ENCODE measurements at regions of chr2 and their contacts with region 1.

Region 1: GRCh38 chr2:44833171-44834069 is 108.1 kb upstream of the SIX3 start:
- DNase-seq: no peak
- H3K4me3 Mint-ChIP-seq: peak overlapping the region; percentile 38
- H3K27ac Mint-ChIP-seq: peak overlapping the region; percentile 94
- H3K4me1 Mint-ChIP-seq: peaks cover 43% of the 10 kb centered on the region
- H3K27me3 Mint-ChIP-seq: no peaks in the 10 kb centered on the region

Region 2: DNA sequence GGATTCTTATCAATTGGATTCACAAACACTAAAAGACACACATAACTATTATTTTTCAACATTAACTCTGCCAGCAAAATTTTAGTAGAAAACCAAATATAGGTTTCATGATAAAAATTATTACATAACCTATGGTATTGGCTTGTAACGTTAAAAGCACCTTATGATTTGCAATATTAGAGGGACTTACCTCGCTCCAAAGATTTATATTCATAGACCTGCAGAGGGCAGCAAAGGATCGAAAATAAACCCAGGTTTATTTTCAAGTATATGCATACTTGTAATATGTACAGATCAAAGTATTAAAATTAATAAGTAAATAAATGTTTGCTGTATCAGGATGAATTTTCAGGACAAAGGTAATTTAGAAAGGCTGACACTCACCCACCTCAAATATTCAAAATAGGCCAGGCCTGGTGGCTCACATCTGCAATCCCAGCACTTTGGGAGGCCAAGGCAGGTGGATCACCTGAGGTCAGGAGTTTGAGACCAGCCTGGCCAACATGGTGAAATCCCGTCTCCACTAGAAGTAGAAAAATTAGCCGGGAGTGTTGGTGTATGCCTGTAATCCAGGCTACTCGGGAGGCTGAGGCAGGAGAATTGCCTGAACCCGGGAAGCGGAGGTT is 882.9 kb before region 1 on chr2:
- intact Hi-C with region 1: no loop called
- DNase-seq: no peak
- H3K4me3 Mint-ChIP-seq: no peak overlapping the region
- H3K27ac Mint-ChIP-seq: peak overlapping the region; percentile 11
- H3K4me1 Mint-ChIP-seq: peaks cover 2% of the 10 kb centered on the region
- H3K27me3 Mint-ChIP-seq: no peaks in the 10 kb centered on the region

Region 3: DNA sequence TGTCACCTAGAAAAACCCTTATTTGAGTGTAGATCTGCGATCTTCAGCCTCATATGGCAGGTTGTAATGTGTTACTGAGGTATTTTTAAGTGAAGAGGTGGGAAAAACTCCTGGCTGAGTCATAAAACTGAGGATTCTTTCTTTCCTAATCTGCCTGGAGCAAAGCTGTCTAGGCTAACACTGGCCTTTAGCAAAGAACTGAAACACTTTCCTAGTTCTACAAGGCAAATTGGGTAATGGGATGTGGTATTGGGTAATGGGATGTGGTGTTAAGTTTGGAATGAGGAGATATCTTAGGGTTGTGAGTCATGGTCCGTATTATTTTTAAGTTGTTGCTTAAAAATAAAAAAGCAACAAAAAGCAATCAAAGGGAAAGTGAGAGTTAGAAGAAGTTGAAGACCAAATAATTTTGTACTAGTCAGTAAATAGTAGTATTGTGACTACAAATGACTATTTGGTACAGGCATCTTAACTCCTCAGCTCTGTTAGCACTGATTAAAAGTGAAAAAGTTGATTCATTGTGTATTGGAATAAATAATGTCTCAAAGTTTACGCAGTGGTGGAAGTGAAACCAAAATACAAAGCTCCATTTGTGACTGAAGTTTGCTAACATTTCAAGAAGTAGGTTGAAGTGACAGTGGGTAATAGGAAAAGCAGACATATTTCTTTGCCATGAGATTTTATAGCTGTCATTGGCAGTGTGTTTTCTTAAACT is 254.8 kb before region 1 on chr2:
- intact Hi-C with region 1: loop called (anchors 1 kb)
- DNase-seq: no peak
- H3K4me3 Mint-ChIP-seq: peak overlapping the region; percentile 40
- H3K27ac Mint-ChIP-seq: peak overlapping the region; percentile 74
- H3K4me1 Mint-ChIP-seq: peaks cover 30% of the 10 kb centered on the region
- H3K27me3 Mint-ChIP-seq: no peaks in the 10 kb centered on the region

Region 4: DNA sequence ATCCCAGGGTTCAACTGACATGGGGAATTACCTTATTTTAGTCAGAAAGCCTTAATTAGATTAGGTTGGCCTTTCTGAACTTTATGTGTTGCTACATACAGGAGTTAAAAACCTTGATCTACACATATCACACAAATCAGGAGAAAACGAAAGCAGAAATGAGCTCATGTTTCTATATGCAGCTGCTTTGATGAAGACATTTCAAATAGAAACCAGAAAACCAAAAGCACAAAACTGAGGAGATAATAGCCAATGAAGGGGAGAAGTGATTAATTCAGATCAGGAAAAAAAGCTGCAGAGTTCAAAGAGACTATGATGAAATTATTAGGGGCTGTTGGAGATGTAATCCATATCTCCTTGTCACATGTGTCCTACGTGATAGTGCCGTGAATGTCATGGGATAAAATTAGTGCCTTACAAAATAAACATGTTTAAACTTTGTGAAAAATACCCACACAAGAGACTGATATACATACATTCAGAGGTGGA is 216.7 kb before region 1 on chr2:
- intact Hi-C with region 1: loop called (anchors 2 kb)
- DNase-seq: no peak
- H3K4me3 Mint-ChIP-seq: no peak overlapping the region
- H3K27ac Mint-ChIP-seq: no peak overlapping the region
- H3K4me1 Mint-ChIP-seq: peaks cover 12% of the 10 kb centered on the region
- H3K27me3 Mint-ChIP-seq: no peaks in the 10 kb centered on the region

Region 5: DNA sequence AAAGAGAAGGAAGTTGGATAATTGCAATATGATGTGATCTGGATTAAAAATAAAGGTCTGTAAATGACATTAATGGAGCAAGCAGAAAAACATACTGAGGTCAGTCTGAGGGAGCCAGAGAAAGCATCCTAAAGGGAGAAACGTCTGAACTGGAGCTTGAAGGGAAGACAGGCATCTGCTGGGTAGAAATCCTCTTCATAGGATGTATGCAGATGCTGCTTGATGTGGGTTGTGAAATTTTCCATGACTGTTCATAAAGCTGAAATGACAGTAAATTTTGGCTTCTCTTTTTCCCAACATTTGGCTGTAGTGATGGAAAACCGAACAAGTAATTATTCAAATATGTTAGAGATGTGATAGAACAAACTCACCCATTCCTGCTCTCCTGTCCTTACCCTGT is 184.0 kb before region 1 on chr2:
- intact Hi-C with region 1: no loop called
- DNase-seq: no peak
- H3K4me3 Mint-ChIP-seq: no peak overlapping the region
- H3K27ac Mint-ChIP-seq: no peak overlapping the region
- H3K4me1 Mint-ChIP-seq: peaks cover 6% of the 10 kb centered on the region
- H3K27me3 Mint-ChIP-seq: no peaks in the 10 kb centered on the region

Region 6: GRCh38 chr2:44802777-44803424 is 30.5 kb before region 1 on chr2:
- intact Hi-C with region 1: loop called (anchors 1 kb)
- DNase-seq: no peak
- H3K4me3 Mint-ChIP-seq: no peak overlapping the region
- H3K27ac Mint-ChIP-seq: no peak overlapping the region
- H3K4me1 Mint-ChIP-seq: peaks cover 29% of the 10 kb centered on the region
- H3K27me3 Mint-ChIP-seq: peaks cover 80% of the 10 kb centered on the region

Region 7: GRCh38 chr2:44897406-44897805 is 64.0 kb after region 1 on chr2:
- intact Hi-C with region 1: loop called (anchors 10 kb)
- DNase-seq: no peak
- H3K4me3 Mint-ChIP-seq: no peak overlapping the region
- H3K27ac Mint-ChIP-seq: no peak overlapping the region
- H3K4me1 Mint-ChIP-seq: peaks cover 12% of the 10 kb centered on the region
- H3K27me3 Mint-ChIP-seq: no peaks in the 10 kb centered on the region

Region 8: GRCh38 chr2:44909831-44910230 is 76.4 kb after region 1 on chr2:
- intact Hi-C with region 1: no loop called
- DNase-seq: no peak
- H3K4me3 Mint-ChIP-seq: no peak overlapping the region
- H3K27ac Mint-ChIP-seq: no peak overlapping the region
- H3K4me1 Mint-ChIP-seq: no peaks in the 10 kb centered on the region
- H3K27me3 Mint-ChIP-seq: peaks cover 11% of the 10 kb centered on the region

Region 9: GRCh38 chr2:45494269-45494977 is 661.0 kb after region 1 on chr2:
- intact Hi-C with region 1: loop called (anchors 2 kb)
- DNase-seq: no peak
- H3K4me3 Mint-ChIP-seq: no peak overlapping the region
- H3K27ac Mint-ChIP-seq: no peak overlapping the region
- H3K4me1 Mint-ChIP-seq: peaks cover 34% of the 10 kb centered on the region
- H3K27me3 Mint-ChIP-seq: no peaks in the 10 kb centered on the region

Region 10: GRCh38 chr2:45567974-45568789 is 734.8 kb after region 1 on chr2:
- intact Hi-C with region 1: loop called (anchors 10 kb)
- DNase-seq: no peak
- H3K4me3 Mint-ChIP-seq: peak overlapping the region; percentile 64
- H3K27ac Mint-ChIP-seq: peak overlapping the region; percentile 92
- H3K4me1 Mint-ChIP-seq: peaks cover 36% of the 10 kb centered on the region
- H3K27me3 Mint-ChIP-seq: no peaks in the 10 kb centered on the region